ENCODE measurements at regions of chr1 and their contacts with region 1.

Region 1: DNA sequence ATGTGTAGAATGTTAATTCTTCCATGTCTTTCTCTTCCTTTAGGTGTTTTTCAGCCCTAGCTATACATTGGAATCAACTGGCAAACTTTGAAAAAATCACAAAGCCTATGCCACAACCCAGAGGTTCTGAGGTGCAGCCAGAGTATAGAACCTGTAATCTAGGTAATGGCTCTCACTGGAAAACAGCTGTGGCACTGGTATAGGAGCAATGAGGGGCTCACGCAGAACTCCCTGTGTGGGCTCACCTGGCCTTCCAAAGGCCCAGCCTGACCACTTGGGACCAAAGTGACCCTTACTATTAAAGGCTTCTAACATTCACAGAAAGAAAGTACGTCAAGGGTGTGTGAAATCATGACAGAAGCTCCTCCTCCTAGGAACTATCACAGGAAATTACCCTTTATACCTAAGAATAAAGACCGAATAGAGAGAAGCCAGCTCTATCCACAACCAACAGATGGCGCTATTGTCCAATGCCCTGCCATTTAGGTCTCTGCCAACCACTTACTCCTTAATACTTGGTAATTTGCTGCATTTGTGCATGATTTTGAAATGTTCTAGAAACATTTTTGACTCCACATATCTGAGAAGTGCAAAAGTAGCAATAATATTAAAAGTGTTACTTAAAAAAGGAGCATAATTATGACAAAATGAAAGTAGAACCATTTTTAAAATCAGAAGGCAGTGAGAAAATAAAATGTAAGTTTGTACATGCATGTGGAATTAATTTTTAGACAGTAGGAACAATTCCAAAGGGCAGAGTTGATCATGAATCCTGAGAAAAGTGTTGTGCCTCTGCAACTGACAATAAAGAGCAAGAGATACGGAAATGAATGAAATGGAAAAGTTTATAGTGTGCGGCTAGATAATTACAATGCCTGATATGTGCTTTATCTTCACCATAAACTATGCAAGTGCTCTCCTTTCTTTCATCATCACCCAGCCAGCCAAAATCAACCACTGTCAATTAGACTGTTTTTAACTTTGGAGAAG is 93.1 kb upstream of the HAO2 start:
- DNase-seq: no peak
- ATAC-seq: peak; percentile 97
- H3K4me3 ChIP-seq: no peak overlapping the region
- H3K27ac ChIP-seq: no peak overlapping the region
- H3K4me1 ChIP-seq: no peaks in the 10 kb centered on the region
- H3K27me3 ChIP-seq: no peaks in the 10 kb centered on the region
- CTCF ChIP-seq: peak; percentile 80 to 95 (median 92)
- EP300 ChIP-seq: no peak
- POLR2A ChIP-seq: no peak
- RAD21 ChIP-seq: peak; percentile 72

Region 2: GRCh38 chr1:117942293-117942692 is 1333.1 kb before region 1 on chr1:
- CTCF ChIA-PET with region 1: no interaction called
- POLR2A ChIA-PET with region 1: no interaction called
- RAD21 ChIA-PET with region 1: no interaction called
- SMC1A ChIA-PET with region 1: no interaction called
- in situ Hi-C with region 1: no loop called
- intact Hi-C with region 1: no loop called
- DNase-seq: no peak
- ATAC-seq: no peak
- H3K4me3 ChIP-seq: no peak overlapping the region
- H3K27ac ChIP-seq: no peak overlapping the region
- H3K4me1 ChIP-seq: no peaks in the 10 kb centered on the region
- H3K27me3 ChIP-seq: no peaks in the 10 kb centered on the region
- CTCF ChIP-seq: no peak
- EP300 ChIP-seq: no peak
- POLR2A ChIP-seq: no peak
- RAD21 ChIP-seq: no peak

Region 3: GRCh38 chr1:119008483-119009311 is 266.7 kb before region 1 on chr1:
- CTCF ChIA-PET with region 1: interaction called, 21 read pairs
- POLR2A ChIA-PET with region 1: no interaction called
- RAD21 ChIA-PET with region 1: interaction called, 5 read pairs
- SMC1A ChIA-PET with region 1: interaction called, 3 read pairs
- in situ Hi-C with region 1: no loop called
- intact Hi-C with region 1: no loop called
- DNase-seq: peak; percentile 31
- ATAC-seq: peak; percentile 77
- H3K4me3 ChIP-seq: no peak overlapping the region
- H3K27ac ChIP-seq: no peak overlapping the region
- H3K4me1 ChIP-seq: no peaks in the 10 kb centered on the region
- H3K27me3 ChIP-seq: peaks cover 6 to 10% of the 10 kb centered on the region in 2 experiments
- CTCF ChIP-seq: peak; percentile 43 to 65 (median 53); a peak in 5 of 6 replicates
- EP300 ChIP-seq: no peak
- POLR2A ChIP-seq: no peak
- RAD21 ChIP-seq: peak; percentile 77

Region 4: DNA sequence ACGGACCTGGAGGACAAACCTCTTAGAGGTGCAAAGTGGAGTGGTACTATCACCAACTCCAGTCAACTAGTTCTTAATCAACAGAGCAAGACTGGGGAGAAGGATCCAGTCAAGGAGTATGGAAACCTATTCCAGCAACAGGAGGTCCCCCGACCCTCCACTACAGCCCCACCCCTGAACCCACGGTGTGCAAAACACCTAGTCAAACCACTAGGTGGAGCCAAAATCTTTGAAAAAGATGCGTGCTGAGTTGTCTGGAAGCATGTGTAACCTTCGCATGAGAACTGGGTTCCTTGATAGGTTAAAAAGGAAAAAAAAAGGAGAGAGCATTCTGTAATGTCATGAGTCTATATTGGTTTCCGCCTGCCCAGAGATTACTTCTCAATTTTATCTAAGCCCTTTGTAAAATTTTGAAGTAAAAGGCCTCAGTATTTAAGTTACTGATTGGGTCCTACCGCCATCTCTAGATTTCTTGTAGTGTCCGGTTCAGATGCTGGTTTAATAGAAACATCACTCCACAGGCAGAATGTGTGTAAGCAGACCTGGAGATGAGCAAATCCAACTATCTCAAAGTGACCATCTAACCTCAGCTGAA is 11.2 kb after region 1 on chr1:
- CTCF ChIA-PET with region 1: interaction called, 33 read pairs
- POLR2A ChIA-PET with region 1: no interaction called
- RAD21 ChIA-PET with region 1: interaction called, 18 read pairs
- SMC1A ChIA-PET with region 1: interaction called, 9 read pairs
- in situ Hi-C with region 1: no loop called
- intact Hi-C with region 1: no loop called
- DNase-seq: no peak
- ATAC-seq: peak; percentile 98
- H3K4me3 ChIP-seq: no peak overlapping the region
- H3K27ac ChIP-seq: no peak overlapping the region
- H3K4me1 ChIP-seq: no peaks in the 10 kb centered on the region
- H3K27me3 ChIP-seq: no peaks in the 10 kb centered on the region
- CTCF ChIP-seq: peak; percentile 67 to 73 (median 72)
- EP300 ChIP-seq: no peak
- POLR2A ChIP-seq: no peak
- RAD21 ChIP-seq: peak; percentile 97

Region 5: DNA sequence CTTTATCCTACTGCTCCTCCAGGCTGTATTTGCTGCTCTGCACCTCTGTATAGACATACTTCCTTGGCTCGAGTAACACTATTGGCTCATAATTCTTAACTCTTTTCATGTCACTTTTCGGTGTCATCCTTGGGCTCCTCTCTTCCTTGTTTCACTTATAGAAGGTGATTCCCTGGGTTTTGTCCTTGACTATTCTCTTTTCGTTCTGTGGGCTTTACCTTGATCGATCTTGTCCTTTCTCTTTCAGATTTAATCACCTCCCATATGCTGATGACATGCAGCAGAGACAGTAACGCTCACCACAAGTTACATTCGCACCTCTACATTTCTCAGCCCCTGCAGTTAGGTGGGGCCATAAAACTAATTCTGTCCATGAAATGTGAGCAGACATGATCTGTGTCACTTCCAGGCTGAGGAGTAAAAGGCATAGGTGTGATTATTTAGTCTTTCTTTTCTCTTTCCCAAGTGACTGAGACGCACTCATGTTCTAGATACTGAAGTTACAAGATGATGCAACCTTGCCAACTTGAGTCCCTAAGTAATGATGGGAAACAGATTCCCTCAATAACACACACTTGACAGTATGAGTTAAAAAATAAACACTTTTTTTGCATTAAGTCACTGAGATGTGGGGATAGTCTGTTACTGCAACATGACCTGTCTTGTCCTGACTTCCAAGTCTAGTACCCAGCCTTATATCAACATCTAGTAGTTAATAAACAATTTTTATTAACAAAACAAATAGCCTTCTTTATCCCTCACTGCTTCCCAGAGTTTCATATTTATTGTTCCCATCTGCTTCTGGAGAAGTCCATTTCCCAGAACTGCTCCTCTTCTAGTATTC is 43.2 kb after region 1 on chr1:
- CTCF ChIA-PET with region 1: interaction called, 37 read pairs
- POLR2A ChIA-PET with region 1: no interaction called
- RAD21 ChIA-PET with region 1: interaction called, 15 read pairs
- SMC1A ChIA-PET with region 1: interaction called, 6 read pairs
- in situ Hi-C with region 1: no loop called
- intact Hi-C with region 1: no loop called
- DNase-seq: peak; percentile 82
- ATAC-seq: peak; percentile 84
- H3K4me3 ChIP-seq: peak overlapping the region; percentile 59
- H3K27ac ChIP-seq: peak overlapping the region; percentile 76
- H3K4me1 ChIP-seq: peaks cover 22% of the 10 kb centered on the region
- H3K27me3 ChIP-seq: no peaks in the 10 kb centered on the region
- CTCF ChIP-seq: peak in 1 of 3 experiments; percentile 3; a peak in 1 of 6 replicates
- EP300 ChIP-seq: peak in 1 of 2 experiments; percentile 66; a peak in 1 of 4 replicates
- POLR2A ChIP-seq: no peak
- RAD21 ChIP-seq: peak; percentile 4; the same call in 1 of the 2 replicates

Region 6: GRCh38 chr1:119358636-119359035 is 83.2 kb after region 1 on chr1:
- CTCF ChIA-PET with region 1: interaction called, 11 read pairs
- POLR2A ChIA-PET with region 1: no interaction called
- RAD21 ChIA-PET with region 1: interaction called, 4 read pairs
- SMC1A ChIA-PET with region 1: interaction called, 4 read pairs
- in situ Hi-C with region 1: no loop called
- intact Hi-C with region 1: no loop called
- DNase-seq: no peak
- ATAC-seq: no peak
- H3K4me3 ChIP-seq: no peak overlapping the region
- H3K27ac ChIP-seq: no peak overlapping the region
- H3K4me1 ChIP-seq: peaks cover 7% of the 10 kb centered on the region; the same call in 1 of the 2 replicates
- H3K27me3 ChIP-seq: no peaks in the 10 kb centered on the region
- CTCF ChIP-seq: no peak
- EP300 ChIP-seq: no peak
- POLR2A ChIP-seq: no peak
- RAD21 ChIP-seq: no peak

Region 7: GRCh38 chr1:119431836-119432235 is 156.4 kb after region 1 on chr1:
- CTCF ChIA-PET with region 1: no interaction called
- POLR2A ChIA-PET with region 1: no interaction called
- RAD21 ChIA-PET with region 1: no interaction called
- SMC1A ChIA-PET with region 1: no interaction called
- in situ Hi-C with region 1: no loop called
- intact Hi-C with region 1: no loop called
- DNase-seq: no peak
- ATAC-seq: no peak
- H3K4me3 ChIP-seq: no peak overlapping the region
- H3K27ac ChIP-seq: no peak overlapping the region
- H3K4me1 ChIP-seq: no peaks in the 10 kb centered on the region
- H3K27me3 ChIP-seq: peaks cover 0 to 4% of the 10 kb centered on the region in 2 experiments
- CTCF ChIP-seq: no peak
- EP300 ChIP-seq: no peak
- POLR2A ChIP-seq: no peak
- RAD21 ChIP-seq: no peak

Region 8: DNA sequence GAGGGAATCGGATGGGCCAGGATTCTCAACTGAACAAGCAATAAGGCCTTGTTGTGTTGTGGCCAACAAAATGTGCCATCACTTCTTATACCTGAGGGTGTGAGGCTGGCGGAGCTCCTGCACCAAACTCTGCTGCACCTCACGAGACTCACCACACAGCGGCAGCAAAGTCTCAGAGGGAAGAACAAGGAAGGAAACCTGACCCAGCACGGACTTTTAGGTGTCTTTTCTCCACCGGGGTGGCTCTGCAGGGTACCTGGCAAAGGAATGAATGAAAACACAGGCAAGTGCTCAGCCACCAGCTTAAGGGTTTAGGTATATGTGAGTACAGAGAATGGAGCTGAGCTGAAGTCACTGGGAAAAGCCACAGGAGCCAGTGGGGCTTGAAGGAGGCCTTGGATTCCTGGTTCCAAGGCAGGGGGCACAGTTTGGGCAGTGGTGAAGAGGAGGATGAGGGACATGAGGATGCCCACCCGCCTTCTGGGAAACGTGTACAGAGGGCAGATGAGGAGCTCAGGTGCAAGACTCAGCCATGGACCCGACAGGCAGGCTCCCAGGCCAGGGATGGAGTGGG is 200.5 kb after region 1 on chr1:
- CTCF ChIA-PET with region 1: interaction called, 10 read pairs
- POLR2A ChIA-PET with region 1: no interaction called
- RAD21 ChIA-PET with region 1: no interaction called
- SMC1A ChIA-PET with region 1: no interaction called
- in situ Hi-C with region 1: no loop called
- intact Hi-C with region 1: no loop called
- DNase-seq: no peak
- ATAC-seq: peak; percentile 96
- H3K4me3 ChIP-seq: no peak overlapping the region
- H3K27ac ChIP-seq: no peak overlapping the region
- H3K4me1 ChIP-seq: no peaks in the 10 kb centered on the region
- H3K27me3 ChIP-seq: no peaks in the 10 kb centered on the region
- CTCF ChIP-seq: peak; percentile 64 to 83 (median 81)
- EP300 ChIP-seq: no peak
- POLR2A ChIP-seq: no peak
- RAD21 ChIP-seq: peak; percentile 59